B cell (primary cell): ENCODE measurements at regions of chr21 and their contacts with region 1.

Region 1: DNA sequence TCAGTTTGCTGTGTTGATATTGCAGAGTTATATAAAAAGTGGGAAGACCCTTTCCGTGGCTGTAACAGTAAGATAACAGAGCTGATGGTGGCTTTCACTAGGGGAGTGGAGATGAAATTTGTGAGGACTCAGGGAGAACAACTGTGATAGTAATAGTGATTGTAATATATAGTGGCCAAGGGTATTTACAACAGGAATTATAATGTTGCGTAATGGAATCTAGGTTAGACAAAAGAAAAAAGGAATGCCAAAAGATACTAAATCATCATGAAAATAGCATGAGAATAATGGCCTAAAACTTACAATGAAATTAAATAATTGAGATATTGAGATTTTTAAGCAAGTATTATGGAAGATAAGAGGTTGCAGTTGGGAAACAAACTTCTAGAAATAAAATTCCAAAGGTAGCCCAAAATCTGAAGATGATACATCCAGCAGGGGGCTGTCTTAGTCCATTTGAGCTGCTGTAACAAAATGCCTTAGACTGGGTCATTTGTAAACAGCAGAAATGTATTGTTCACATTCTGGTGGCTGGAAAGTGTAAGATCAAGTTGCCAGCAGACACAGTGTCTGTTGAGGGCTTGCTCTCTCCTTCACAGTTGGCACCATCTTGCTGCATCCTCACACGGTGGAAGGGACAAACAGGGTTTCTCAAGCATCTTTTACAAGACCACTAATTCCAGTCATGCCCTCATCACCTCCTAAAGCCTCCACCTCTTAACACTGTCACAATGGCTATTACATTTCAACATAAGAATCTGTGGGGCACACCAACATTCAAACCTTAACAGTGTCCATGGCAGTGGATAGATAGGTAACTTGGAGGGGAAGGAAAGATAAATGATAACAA is 711.2 kb downstream of the MRPL39 start:
- DNase-seq: peak; percentile 62
- ATAC-seq: peak; percentile 41
- H3K4me3 ChIP-seq: no peak overlapping the region
- H3K4me3 Mint-ChIP-seq: no peak overlapping the region
- H3K27ac ChIP-seq: peak overlapping the region in 1 of 2 donors; percentile 13
- H3K27ac Mint-ChIP-seq: no peak overlapping the region
- H3K4me1 ChIP-seq: peaks cover 6% of the 10 kb centered on the region in 2 donors
- H3K4me1 Mint-ChIP-seq: peaks cover 14% of the 10 kb centered on the region
- H3K27me3 ChIP-seq: no peaks in the 10 kb centered on the region
- H3K27me3 Mint-ChIP-seq: no peaks in the 10 kb centered on the region
- CTCF ChIP-seq: peak; percentile 55

Region 2: DNA sequence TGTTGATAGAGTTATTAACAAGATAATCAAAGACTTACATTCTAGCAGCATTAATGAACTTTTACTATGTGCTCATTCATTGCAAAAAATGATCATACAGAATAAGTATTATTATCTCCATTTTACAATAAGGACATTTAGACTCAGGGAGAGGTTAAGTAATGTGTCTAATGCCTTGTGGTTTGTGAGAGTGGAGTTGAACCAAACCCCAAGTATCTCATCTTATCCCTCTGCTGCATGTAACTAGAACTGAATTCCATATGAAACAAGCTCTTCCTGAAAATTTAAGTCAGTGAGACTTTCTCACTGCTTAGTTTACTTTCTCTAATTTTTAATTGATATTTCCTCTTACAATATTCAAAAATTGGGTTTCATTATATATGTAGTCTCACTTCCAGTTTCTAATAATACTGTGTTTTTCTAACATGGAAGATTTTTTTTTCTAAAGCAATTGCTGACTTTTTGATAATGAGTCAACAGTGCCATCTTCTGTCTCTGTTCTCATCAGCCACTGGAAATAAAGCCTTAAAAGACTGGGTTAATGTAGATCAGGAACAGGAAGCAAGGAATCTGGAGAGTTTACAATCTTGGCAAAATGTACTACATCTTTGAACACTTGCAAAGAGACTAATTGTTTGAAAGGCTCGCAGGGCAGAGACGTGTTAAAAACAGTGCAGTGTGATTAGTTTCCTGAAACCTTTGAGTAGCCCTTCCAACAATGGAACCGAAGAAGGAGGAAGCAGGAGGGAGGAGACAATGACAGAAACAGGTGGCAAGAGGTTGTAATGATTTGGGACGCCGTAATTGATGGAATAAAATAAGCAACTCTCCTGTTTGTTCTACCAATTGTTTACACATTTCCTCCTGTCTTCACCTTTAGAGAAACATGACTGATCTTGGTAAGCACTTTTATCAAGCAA is 143.6 kb after region 1 on chr21:
- CTCF ChIA-PET with region 1: interaction called, 3 read pairs
- POLR2A ChIA-PET with region 1: no interaction called
- intact Hi-C with region 1: loop called (anchors 5 kb)
- DNase-seq: peak; percentile 70
- ATAC-seq: peak; percentile 57
- H3K4me3 ChIP-seq: peak overlapping the region in 3 of 5 experiments; percentile 4 to 39 (median 31)
- H3K4me3 Mint-ChIP-seq: peak overlapping the region; percentile 83
- H3K27ac ChIP-seq: peak overlapping the region; percentile 48
- H3K27ac Mint-ChIP-seq: peak overlapping the region; percentile 84
- H3K4me1 ChIP-seq: peaks cover 22 to 23% of the 10 kb centered on the region in 2 donors
- H3K4me1 Mint-ChIP-seq: peaks cover 37% of the 10 kb centered on the region
- H3K27me3 ChIP-seq: no peaks in the 10 kb centered on the region
- H3K27me3 Mint-ChIP-seq: no peaks in the 10 kb centered on the region
- CTCF ChIP-seq: peak; percentile 63

Region 3: DNA sequence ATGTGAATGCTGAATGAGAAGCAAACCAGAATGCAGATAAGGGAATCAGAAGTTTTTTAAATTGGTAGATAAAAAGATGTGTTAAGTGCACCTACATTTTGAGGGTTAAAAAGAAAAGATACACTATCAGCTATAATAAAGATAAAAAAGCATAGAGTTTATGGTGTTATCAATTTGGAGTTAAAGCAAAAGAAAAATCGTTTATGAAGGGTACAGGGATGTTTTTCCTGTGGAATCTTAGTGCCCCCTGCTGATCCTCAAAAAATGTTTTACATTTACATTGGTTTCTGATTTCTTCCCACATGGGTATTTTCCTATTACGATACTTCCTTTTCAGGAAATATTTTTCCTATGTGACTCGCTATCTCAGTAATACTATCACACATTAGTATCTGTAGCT is 417.7 kb after region 1 on chr21:
- CTCF ChIA-PET with region 1: interaction called, 31 read pairs
- POLR2A ChIA-PET with region 1: no interaction called
- intact Hi-C with region 1: no loop called
- DNase-seq: peak; percentile 58
- ATAC-seq: no peak
- H3K4me3 ChIP-seq: peak overlapping the region in 1 of 5 experiments; percentile 13
- H3K4me3 Mint-ChIP-seq: peak overlapping the region; percentile 42
- H3K27ac ChIP-seq: no peak overlapping the region
- H3K27ac Mint-ChIP-seq: no peak overlapping the region
- H3K4me1 ChIP-seq: peaks cover 3 to 10% of the 10 kb centered on the region in 2 donors
- H3K4me1 Mint-ChIP-seq: peaks cover 13% of the 10 kb centered on the region
- H3K27me3 ChIP-seq: no peaks in the 10 kb centered on the region
- H3K27me3 Mint-ChIP-seq: no peaks in the 10 kb centered on the region
- CTCF ChIP-seq: peak; percentile 76